Activated CD8-positive, alpha-beta T cell treated with anti-CD3 and anti-CD28 coated beads for 36 hours (primary cell): ENCODE measurements at regions of chr15 and their contacts with region 1.

Region 1: DNA sequence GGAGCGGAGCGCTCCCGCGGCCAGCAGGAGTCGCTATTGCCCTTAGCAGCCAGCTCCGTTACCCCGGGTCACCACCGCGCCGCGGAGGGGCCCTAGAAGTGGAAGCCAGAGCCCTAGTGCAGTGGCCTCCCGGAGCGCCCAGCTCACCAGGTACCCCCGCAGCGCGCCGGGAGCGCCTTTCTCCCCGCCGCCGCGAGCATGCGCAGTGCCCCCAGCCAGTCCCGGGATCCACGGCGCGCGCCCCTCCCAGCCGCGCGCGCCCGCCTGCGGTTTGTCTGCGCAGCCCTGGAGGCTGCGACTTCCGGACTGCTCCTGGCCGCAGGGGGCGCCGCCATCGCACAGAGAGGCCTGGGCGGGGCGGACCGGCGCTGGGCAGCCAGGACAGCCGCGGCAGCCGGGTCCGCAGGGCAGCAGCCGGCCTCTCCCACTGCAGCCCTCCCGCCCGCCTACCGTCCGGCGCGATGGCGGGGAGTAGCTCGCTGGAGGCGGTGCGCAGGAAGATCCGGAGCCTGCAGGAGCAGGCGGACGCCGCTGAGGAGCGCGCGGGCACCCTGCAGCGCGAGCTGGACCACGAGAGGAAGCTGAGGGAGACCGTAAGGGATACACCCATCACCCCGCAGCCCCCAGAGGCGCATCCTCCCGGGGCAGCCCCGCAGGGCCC is 5.7 kb downstream of the TPM1 start:
- DNase-seq: peak; percentile 91
- ATAC-seq: peak; percentile 87
- H3K4me3 Mint-ChIP-seq: peak overlapping the region; percentile 90
- H3K27ac Mint-ChIP-seq: no peak overlapping the region
- H3K4me1 Mint-ChIP-seq: peaks cover 7% of the 10 kb centered on the region
- H3K27me3 Mint-ChIP-seq: peaks cover 37% of the 10 kb centered on the region
- CTCF ChIP-seq: peak; percentile 99

Region 2: DNA sequence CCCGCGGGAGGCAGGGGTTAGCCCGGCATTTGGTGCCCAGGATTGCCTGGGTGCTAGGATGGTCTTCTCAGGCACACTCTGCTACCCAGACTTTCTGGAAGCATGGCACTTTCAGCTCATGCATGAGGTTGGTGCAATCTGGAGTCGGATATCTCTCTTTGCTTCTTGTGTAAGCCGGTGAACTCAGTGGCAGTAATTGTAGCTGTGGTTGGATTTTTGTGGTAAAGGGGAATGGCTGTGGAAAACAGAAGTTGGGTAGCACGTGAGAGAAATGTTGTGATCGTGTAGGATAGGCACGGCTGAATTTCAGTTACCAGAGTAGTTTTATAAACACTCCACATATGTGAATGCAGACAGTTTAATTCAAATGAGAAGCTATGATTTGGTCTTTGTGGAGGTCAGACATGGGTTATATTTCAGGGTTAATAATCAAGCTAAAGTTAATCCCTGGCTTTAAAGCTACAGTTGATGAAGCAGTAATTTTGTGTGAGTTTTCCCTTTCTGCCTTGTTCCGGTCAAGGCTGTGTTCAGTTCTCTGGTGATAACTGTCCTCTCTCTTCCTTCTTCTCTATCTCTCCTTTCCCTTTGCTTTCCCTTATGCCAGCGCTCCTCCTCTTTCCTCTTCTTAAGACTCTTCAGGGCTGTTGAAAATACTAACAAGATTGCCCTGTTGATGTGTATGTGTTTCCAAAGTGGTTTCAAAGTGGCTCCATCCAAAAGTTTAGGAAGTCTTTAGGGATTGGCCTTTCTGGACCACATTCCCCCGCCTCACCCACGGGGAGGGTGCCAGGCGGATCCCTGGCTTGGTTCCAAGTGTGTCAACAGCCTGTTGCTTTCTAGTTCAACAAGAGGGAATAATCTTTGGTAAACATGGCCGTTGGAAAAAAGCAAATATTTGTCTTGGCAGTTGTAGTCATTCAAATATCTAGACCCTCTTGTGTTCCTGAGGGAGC is 478.5 kb before region 1 on chr15:
- CTCF ChIA-PET with region 1: no interaction called
- POLR2A ChIA-PET with region 1: no interaction called
- intact Hi-C with region 1: no loop called
- DNase-seq: no peak
- ATAC-seq: no peak
- H3K4me3 Mint-ChIP-seq: no peak overlapping the region
- H3K27ac Mint-ChIP-seq: no peak overlapping the region
- H3K4me1 Mint-ChIP-seq: no peaks in the 10 kb centered on the region
- H3K27me3 Mint-ChIP-seq: peaks cover 5% of the 10 kb centered on the region
- CTCF ChIP-seq: no peak

Region 3: DNA sequence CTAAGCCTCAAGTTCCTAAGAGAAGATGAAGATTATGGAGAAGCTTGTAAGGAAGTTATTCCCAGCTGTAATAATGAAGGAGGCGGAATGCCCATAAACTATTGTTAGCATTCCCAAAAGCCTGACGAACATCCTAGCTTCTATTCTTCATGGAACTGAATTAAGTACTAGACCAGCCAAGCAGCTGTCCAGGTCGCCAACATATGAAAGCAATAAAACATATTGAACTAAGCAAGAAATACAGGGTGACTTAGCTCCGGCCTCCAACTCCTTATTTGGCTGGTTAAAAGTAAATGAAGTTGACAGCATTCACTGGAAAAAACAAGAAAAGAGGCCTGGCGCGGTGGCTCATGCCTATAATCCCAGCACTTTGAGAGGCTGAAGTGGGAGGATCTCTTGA is 179.7 kb before region 1 on chr15:
- CTCF ChIA-PET with region 1: no interaction called
- POLR2A ChIA-PET with region 1: no interaction called
- intact Hi-C with region 1: no loop called
- DNase-seq: no peak
- ATAC-seq: no peak
- H3K4me3 Mint-ChIP-seq: no peak overlapping the region
- H3K27ac Mint-ChIP-seq: no peak overlapping the region
- H3K4me1 Mint-ChIP-seq: no peaks in the 10 kb centered on the region
- H3K27me3 Mint-ChIP-seq: no peaks in the 10 kb centered on the region
- CTCF ChIP-seq: no peak

Region 4: DNA sequence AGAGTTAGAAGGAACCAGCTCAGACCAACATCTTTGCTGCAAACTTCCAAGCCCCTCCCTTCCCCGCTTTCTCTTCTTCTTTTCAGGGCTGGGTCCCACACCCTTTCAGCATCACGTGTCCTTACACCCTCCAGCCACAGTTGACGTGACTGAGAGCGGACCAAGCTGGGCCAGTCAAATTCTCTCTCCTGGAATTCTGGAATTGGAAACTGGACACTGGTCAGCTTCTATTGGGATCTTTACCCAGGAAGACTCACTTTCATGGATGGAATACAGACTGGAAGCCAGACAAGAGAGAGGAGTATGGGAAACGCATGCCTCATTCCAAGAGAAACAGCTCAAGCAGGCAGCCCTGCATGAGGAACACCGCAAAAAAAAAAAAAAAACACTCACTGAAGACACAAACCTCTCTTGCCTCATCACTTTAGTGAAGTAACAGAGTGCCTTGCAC is 18.1 kb before region 1 on chr15:
- CTCF ChIA-PET with region 1: interaction called, 43 read pairs
- POLR2A ChIA-PET with region 1: no interaction called
- intact Hi-C with region 1: no loop called
- DNase-seq: no peak
- ATAC-seq: no peak
- H3K4me3 Mint-ChIP-seq: no peak overlapping the region
- H3K27ac Mint-ChIP-seq: no peak overlapping the region
- H3K4me1 Mint-ChIP-seq: no peaks in the 10 kb centered on the region
- H3K27me3 Mint-ChIP-seq: peaks cover 12% of the 10 kb centered on the region
- CTCF ChIP-seq: no peak

Region 5: DNA sequence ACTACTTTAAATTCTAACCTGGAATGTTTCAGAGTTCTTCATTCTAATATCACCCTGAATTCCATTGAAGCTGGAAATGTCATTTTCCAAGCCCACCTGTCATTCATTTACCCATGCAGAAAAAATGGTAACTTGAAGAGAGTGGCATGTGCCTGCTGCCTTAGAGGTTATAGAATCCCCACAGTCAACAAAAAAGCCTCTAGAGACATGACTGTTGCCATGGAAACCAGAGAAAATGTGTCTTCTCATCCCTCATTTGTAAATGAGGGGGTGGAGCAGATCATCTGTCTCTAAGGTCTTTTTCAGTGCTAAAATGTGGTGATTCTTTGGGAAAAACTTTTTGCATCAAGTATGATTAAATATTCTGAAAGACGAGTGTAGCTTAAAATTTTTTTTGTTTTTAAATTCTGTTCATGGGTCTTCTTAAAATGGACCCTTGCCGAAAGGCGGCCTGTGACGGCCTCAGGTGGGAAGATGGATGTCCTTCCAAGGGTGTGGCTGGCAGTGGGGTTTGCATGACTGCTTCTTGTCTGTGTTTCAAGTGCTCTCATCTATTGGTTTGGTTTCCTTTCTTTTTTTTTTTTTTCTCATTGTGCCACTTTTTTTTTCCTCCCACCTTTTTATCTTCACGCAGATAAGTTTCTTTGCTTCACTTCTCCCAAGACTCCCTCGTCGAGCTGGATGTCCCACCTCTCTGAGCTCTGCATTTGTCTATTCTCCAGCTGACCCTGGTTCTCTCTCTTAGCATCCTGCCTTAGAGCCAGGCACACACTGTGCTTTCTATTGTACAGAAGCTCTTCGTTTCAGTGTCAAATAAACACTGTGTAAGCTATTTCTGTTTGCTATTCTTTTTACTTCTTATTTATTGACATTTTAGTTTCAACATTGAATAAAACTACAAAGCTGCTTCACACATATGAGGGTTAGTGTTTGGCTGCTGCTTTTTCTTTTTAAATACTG is 17.3 kb after region 1 on chr15:
- CTCF ChIA-PET with region 1: interaction called, 43 read pairs
- POLR2A ChIA-PET with region 1: no interaction called
- intact Hi-C with region 1: no loop called
- DNase-seq: no peak
- ATAC-seq: no peak
- H3K4me3 Mint-ChIP-seq: no peak overlapping the region
- H3K27ac Mint-ChIP-seq: no peak overlapping the region
- H3K4me1 Mint-ChIP-seq: no peaks in the 10 kb centered on the region
- H3K27me3 Mint-ChIP-seq: no peaks in the 10 kb centered on the region
- CTCF ChIP-seq: no peak

Region 6: GRCh38 chr15:63075984-63076692 is 27.9 kb after region 1 on chr15:
- CTCF ChIA-PET with region 1: interaction called, 12 read pairs
- POLR2A ChIA-PET with region 1: no interaction called
- intact Hi-C with region 1: no loop called
- DNase-seq: no peak
- ATAC-seq: no peak
- H3K4me3 Mint-ChIP-seq: no peak overlapping the region
- H3K27ac Mint-ChIP-seq: no peak overlapping the region
- H3K4me1 Mint-ChIP-seq: peaks cover 8% of the 10 kb centered on the region
- H3K27me3 Mint-ChIP-seq: peaks cover 5% of the 10 kb centered on the region
- CTCF ChIP-seq: no peak

Region 7: DNA sequence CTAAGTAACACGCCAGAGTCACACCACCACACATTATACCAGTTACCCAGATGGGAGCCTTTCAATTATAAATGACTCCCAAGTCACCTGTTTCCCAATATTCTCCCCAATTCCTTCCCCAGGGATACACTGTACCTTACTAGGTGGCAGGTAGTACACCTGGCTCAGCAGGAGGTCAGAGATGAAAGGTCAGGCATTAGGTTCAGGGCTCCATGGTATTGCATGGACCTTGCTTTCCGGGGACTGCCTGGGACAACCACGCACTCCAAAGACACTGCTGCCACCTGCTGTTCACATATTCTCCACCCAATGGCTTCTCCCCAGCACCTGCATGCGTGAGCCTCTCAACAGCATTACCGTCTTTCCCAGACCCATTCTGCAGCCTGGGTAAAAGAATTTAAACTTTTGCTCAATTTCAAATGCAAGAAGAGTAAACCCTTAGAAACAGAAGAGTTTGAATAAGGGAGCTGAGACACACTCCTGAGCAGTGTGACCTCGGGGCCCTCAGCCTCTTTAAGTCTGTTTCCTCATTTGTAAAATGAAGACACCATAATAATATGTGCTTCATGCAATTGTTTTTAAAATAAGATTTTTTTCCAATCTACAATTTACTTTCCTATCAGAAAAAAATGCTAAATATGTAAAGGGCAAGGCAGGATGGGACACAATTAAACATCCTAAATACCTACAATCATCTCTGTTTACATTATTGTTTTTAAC is 45.4 kb after region 1 on chr15:
- CTCF ChIA-PET with region 1: interaction called, 123 read pairs
- POLR2A ChIA-PET with region 1: no interaction called
- intact Hi-C with region 1: loop called (anchors 5 kb)
- DNase-seq: peak; percentile 87
- ATAC-seq: peak; percentile 89
- H3K4me3 Mint-ChIP-seq: no peak overlapping the region
- H3K27ac Mint-ChIP-seq: no peak overlapping the region
- H3K4me1 Mint-ChIP-seq: peaks cover 3% of the 10 kb centered on the region
- H3K27me3 Mint-ChIP-seq: no peaks in the 10 kb centered on the region
- CTCF ChIP-seq: peak; percentile 86

Region 8: DNA sequence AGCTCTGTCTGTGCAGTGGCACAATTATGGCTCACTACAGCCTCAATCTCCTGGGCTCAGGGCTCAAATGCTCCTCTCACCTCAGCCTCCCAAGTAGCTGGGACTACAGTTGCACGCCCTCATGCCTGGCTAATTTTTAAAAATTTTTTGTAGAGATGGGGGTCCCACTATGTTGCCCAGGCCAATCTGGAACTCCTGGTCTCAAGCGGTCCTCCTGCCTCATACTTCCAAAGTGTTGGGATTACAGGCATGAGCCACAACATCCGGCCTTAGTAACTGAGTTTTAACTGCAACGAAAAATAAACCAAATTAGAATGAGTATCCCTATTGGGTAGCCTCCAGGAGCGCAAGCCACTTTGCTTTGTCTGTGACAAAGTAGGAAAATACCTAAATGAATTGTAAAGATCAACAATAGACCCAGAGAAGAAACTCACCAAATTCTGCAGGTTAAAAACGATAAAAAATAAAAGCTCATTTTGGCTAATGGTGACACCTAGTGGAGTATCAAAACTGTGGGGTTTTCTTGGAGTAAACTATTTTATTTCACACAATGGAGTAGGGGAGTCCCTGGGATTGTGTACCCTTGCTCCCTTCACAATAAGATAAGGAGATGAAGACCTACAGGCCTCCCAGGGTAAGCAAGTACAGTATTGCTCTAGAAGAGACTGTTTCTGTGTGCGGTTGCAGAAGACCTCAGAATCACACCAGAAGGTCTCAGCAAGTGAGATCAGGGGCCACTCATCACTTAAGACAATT is 354.4 kb after region 1 on chr15:
- CTCF ChIA-PET with region 1: interaction called, 31 read pairs
- POLR2A ChIA-PET with region 1: no interaction called
- intact Hi-C with region 1: loop called (anchors 5 kb)
- DNase-seq: no peak
- ATAC-seq: peak; percentile 55
- H3K4me3 Mint-ChIP-seq: no peak overlapping the region
- H3K27ac Mint-ChIP-seq: no peak overlapping the region
- H3K4me1 Mint-ChIP-seq: peaks cover 9% of the 10 kb centered on the region
- H3K27me3 Mint-ChIP-seq: no peaks in the 10 kb centered on the region
- CTCF ChIP-seq: peak; percentile 63